CD4-positive, alpha-beta memory T cell (primary cell): ENCODE measurements at regions of chr13 and their contacts with region 1.

Region 1: GRCh38 chr13:22061351-22061805 is 390.5 kb downstream of the FGF9 start:
- DNase-seq: peak; percentile 56 to 81 (median 65)
- H3K4me3 ChIP-seq: no peak overlapping the region
- H3K4me3 Mint-ChIP-seq: peak overlapping the region; percentile 7 to 83 (median 67)
- H3K27ac ChIP-seq: peak overlapping the region; percentile 76
- H3K27ac Mint-ChIP-seq: peak overlapping the region; percentile 92 to 100 (median 99)
- H3K4me1 ChIP-seq: peaks cover 96% of the 10 kb centered on the region
- H3K4me1 Mint-ChIP-seq: peaks cover 72 to 98% (median 83%) of the 10 kb centered on the region in 4 donors
- H3K27me3 ChIP-seq: no peaks in the 10 kb centered on the region
- H3K27me3 Mint-ChIP-seq: no peaks in the 10 kb centered on the region

Region 2: DNA sequence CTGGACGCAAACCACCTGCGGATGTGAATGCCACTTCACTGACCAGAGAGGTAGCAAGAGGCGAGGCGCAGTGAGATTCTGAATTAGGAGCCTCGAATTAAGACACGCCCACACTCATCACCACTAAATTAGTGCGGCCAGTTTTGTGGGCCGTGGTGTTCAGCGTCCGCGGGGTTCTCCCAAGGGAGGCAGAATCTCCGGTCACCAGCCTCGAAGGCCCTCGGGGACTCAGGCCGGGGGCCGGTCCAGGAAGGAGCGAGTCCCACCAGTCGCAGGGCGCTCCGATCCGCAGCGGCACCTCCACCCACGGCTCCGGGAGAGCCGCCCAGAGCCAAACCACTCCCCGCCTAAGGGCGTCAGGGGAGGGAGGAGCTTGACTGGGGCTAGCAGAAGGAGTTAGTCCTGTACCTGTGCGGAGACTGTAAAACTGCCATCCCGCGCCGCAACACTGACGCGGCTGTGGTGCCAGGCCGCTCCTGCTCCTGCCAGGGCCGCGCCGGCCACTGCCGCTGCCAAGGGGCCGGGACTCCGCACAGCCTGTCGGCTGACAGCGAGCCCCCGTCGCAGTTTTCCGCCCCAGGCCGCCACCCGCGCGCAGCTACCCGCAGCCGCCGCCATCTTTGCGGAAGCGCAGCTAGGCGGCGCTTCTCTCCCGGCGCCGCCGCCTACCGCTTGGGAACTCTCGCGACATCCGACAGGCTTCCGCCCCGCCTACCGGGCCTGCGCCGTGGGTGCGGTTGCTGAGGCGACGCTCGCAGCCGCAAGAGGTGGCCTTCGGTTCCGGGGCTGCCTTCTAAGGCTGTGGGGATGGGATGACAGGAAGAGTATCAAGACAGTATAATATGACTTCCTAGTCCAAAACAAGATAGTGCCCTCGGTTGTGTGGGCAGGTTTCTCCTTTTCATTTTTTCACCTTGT is 457.6 kb before region 1 on chr13 and contains the start of gene MICU2:
- CTCF ChIA-PET with region 1: no interaction called
- POLR2A ChIA-PET with region 1: interaction called, 16 read pairs
- intact Hi-C with region 1: loop called (anchors 10 kb)
- DNase-seq: peak; percentile 96 to 97 (median 97)
- H3K4me3 ChIP-seq: peak within 1 kb of the TSS; percentile 78 to 83
- H3K4me3 Mint-ChIP-seq: peak within 1 kb of the TSS; percentile 86 to 97 (median 89)
- H3K27ac ChIP-seq: peak within 1 kb of the TSS; percentile 85
- H3K27ac Mint-ChIP-seq: peak within 1 kb of the TSS; percentile 90 to 97 (median 95)
- H3K4me1 ChIP-seq: peaks cover 36% of the 10 kb centered on the region
- H3K4me1 Mint-ChIP-seq: peaks cover 28 to 58% (median 36%) of the 10 kb centered on the region in 4 donors
- H3K27me3 ChIP-seq: no peaks in the 10 kb centered on the region
- H3K27me3 Mint-ChIP-seq: peaks cover 4% of the 10 kb centered on the region in 2 donors
- total RNA-seq, gene MICU2: 46.0 to 50.3 TPM

Region 3: GRCh38 chr13:21670883-21671619 is 390.3 kb before region 1 on chr13 and contains the start of gene FGF9:
- CTCF ChIA-PET with region 1: interaction called, 8 read pairs
- POLR2A ChIA-PET with region 1: interaction called, 34 read pairs
- intact Hi-C with region 1: loop called (anchors 1 kb)
- DNase-seq: peak; percentile 83 to 89 (median 87)
- H3K4me3 ChIP-seq: peak within 1 kb of the TSS; percentile 69 to 86
- H3K4me3 Mint-ChIP-seq: peak within 1 kb of the TSS; percentile 89 to 98 (median 92)
- H3K27ac ChIP-seq: peak within 1 kb of the TSS; percentile 19
- H3K27ac Mint-ChIP-seq: peak within 1 kb of the TSS; percentile 65 to 93 (median 89)
- H3K4me1 ChIP-seq: peaks cover 45% of the 10 kb centered on the region
- H3K4me1 Mint-ChIP-seq: peaks cover 30 to 58% (median 40%) of the 10 kb centered on the region in 4 donors
- H3K27me3 ChIP-seq: peaks cover 11% of the 10 kb centered on the region
- H3K27me3 Mint-ChIP-seq: peaks cover 6 to 7% of the 10 kb centered on the region in 2 donors
- total RNA-seq, gene FGF9: 6.5 to 7.3 TPM

Region 4: DNA sequence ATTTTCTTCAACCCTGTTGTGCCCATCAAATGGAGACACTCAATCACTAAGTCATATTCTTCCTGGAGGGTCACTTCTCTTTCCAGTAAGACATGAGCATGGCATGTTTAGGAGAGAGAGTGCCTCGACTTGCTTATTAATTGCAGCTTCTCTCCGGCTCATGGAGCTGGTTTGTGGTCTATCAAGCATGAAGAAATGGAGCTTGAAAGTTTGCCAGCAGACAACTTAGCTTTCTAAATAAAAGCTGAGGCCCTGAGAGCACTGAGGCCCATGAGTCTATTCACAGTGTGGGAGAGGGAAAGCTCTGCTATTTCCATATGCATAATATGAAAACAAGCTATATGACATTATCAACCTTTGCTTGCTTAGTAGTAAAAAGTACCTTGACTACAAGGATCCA is 12.0 kb before region 1 on chr13:
- CTCF ChIA-PET with region 1: interaction called, 7 read pairs
- POLR2A ChIA-PET with region 1: interaction called, 12 read pairs
- intact Hi-C with region 1: no loop called
- DNase-seq: no peak
- H3K4me3 ChIP-seq: no peak overlapping the region
- H3K4me3 Mint-ChIP-seq: peak overlapping the region in 1 of 8 donors; percentile 2
- H3K27ac ChIP-seq: no peak overlapping the region
- H3K27ac Mint-ChIP-seq: peak overlapping the region in 2 of 7 donors; percentile 37 to 85
- H3K4me1 ChIP-seq: peaks cover 20% of the 10 kb centered on the region
- H3K4me1 Mint-ChIP-seq: peaks cover 16 to 48% (median 27%) of the 10 kb centered on the region in 4 donors
- H3K27me3 ChIP-seq: no peaks in the 10 kb centered on the region
- H3K27me3 Mint-ChIP-seq: peaks cover 3 to 5% of the 10 kb centered on the region in 2 donors

Region 5: GRCh38 chr13:22082437-22083100 is 21.2 kb after region 1 on chr13:
- CTCF ChIA-PET with region 1: interaction called, 19 read pairs
- POLR2A ChIA-PET with region 1: interaction called, 35 read pairs
- intact Hi-C with region 1: no loop called
- DNase-seq: peak in 4 of 5 donors; percentile 26 to 53 (median 40)
- H3K4me3 ChIP-seq: no peak overlapping the region
- H3K4me3 Mint-ChIP-seq: peak overlapping the region in 6 of 8 donors; percentile 7 to 74 (median 30)
- H3K27ac ChIP-seq: no peak overlapping the region
- H3K27ac Mint-ChIP-seq: peak overlapping the region in 6 of 7 donors; percentile 4 to 83 (median 66)
- H3K4me1 ChIP-seq: peaks cover 26% of the 10 kb centered on the region
- H3K4me1 Mint-ChIP-seq: peaks cover 22 to 32% (median 26%) of the 10 kb centered on the region in 4 donors
- H3K27me3 ChIP-seq: no peaks in the 10 kb centered on the region
- H3K27me3 Mint-ChIP-seq: peaks cover 0 to 2% of the 10 kb centered on the region in 2 donors

Region 6: DNA sequence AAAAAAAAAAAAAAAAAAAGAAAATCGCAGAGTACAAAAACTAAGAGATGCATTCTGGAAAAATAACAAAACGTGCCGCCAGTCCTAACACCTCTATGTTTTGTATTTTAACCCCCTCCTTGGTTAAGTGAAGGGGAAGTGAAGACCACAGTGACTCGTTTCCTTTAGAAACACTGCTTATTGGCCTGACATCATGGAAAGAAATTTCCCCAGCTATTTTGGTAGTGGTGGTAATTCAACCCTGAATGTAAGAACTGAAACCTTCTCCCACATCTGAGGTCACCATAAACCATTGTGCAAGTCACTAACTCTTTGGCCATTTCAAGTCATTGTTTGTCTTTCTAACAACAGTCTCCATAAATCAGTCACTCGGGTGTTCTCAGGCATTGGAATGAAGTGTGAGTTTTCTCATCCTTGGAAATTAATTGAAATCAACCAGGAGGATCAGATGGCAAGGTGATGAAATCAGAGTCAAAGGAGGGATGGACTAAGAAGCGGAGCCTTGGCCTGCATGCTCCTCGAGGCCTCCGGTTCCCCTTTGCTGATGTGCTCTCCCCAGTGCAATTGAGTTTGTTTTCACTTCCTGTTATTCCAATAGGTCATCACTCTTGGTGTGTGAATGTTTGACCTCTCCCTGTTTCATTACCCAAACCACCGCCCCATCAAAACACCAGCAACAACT is 53.4 kb after region 1 on chr13:
- CTCF ChIA-PET with region 1: no interaction called
- POLR2A ChIA-PET with region 1: interaction called, 9 read pairs
- intact Hi-C with region 1: loop called (anchors 2 kb)
- DNase-seq: peak; percentile 72 to 86 (median 82)
- H3K4me3 ChIP-seq: no peak overlapping the region
- H3K4me3 Mint-ChIP-seq: peak overlapping the region in 7 of 8 donors; percentile 36 to 77 (median 49)
- H3K27ac ChIP-seq: no peak overlapping the region
- H3K27ac Mint-ChIP-seq: peak overlapping the region; percentile 54 to 94 (median 92)
- H3K4me1 ChIP-seq: peaks cover 22% of the 10 kb centered on the region
- H3K4me1 Mint-ChIP-seq: peaks cover 16 to 60% (median 38%) of the 10 kb centered on the region in 4 donors
- H3K27me3 ChIP-seq: no peaks in the 10 kb centered on the region
- H3K27me3 Mint-ChIP-seq: no peaks in the 10 kb centered on the region

Region 7: DNA sequence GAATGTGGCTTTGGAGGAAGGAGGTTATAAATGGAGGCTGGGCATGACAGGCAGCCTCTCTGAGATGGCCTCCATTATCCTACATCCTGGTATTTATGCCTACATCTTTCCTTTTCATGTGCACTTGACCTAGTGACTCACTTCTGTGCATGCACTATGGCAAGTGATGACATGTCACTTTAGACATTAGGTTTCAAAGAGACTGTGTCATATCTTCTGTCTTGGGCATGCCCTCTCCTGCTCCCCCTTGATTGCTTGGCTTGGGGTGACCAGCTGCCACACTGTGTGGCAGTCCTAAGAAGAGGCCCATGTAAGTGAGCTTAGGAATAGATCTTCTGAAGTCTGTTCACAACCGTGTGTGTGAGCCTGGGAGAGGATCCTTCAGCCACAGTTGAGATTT is 82.3 kb after region 1 on chr13:
- CTCF ChIA-PET with region 1: no interaction called
- POLR2A ChIA-PET with region 1: no interaction called
- intact Hi-C with region 1: no loop called
- DNase-seq: no peak
- H3K4me3 ChIP-seq: no peak overlapping the region
- H3K4me3 Mint-ChIP-seq: no peak overlapping the region
- H3K27ac ChIP-seq: no peak overlapping the region
- H3K27ac Mint-ChIP-seq: no peak overlapping the region
- H3K4me1 ChIP-seq: peaks cover 7% of the 10 kb centered on the region
- H3K4me1 Mint-ChIP-seq: peaks cover 0 to 13% (median 3%) of the 10 kb centered on the region in 4 donors
- H3K27me3 ChIP-seq: no peaks in the 10 kb centered on the region
- H3K27me3 Mint-ChIP-seq: peaks cover 0 to 1% of the 10 kb centered on the region in 2 donors

Region 8: GRCh38 chr13:22187329-22187728 is 126.0 kb after region 1 on chr13:
- CTCF ChIA-PET with region 1: interaction called, 11 read pairs
- POLR2A ChIA-PET with region 1: interaction called, 6 read pairs
- intact Hi-C with region 1: loop called (anchors 1 kb)
- DNase-seq: peak in 2 of 5 donors; percentile 2 to 3
- H3K4me3 ChIP-seq: no peak overlapping the region
- H3K4me3 Mint-ChIP-seq: no peak overlapping the region
- H3K27ac ChIP-seq: no peak overlapping the region
- H3K27ac Mint-ChIP-seq: peak overlapping the region in 1 of 7 donors; percentile 15
- H3K4me1 ChIP-seq: peaks cover 5% of the 10 kb centered on the region
- H3K4me1 Mint-ChIP-seq: peaks cover 4 to 10% (median 5%) of the 10 kb centered on the region in 4 donors
- H3K27me3 ChIP-seq: no peaks in the 10 kb centered on the region
- H3K27me3 Mint-ChIP-seq: no peaks in the 10 kb centered on the region

Region 9: GRCh38 chr13:22451327-22451741 is 390.0 kb after region 1 on chr13:
- CTCF ChIA-PET with region 1: no interaction called
- POLR2A ChIA-PET with region 1: no interaction called
- intact Hi-C with region 1: no loop called
- DNase-seq: no peak
- H3K4me3 ChIP-seq: no peak overlapping the region
- H3K4me3 Mint-ChIP-seq: no peak overlapping the region
- H3K27ac ChIP-seq: no peak overlapping the region
- H3K27ac Mint-ChIP-seq: no peak overlapping the region
- H3K4me1 ChIP-seq: no peaks in the 10 kb centered on the region
- H3K4me1 Mint-ChIP-seq: no peaks in the 10 kb centered on the region
- H3K27me3 ChIP-seq: no peaks in the 10 kb centered on the region
- H3K27me3 Mint-ChIP-seq: no peaks in the 10 kb centered on the region